Activated CD8-positive, alpha-beta T cell treated with anti-CD3 and anti-CD28 coated beads, Interleukin-2, amount 10 ng/mL, durations not matched to agents 7 days and 5 days (primary cell): ENCODE measurements at regions of chr1 and their contacts with region 1.

Region 1: DNA sequence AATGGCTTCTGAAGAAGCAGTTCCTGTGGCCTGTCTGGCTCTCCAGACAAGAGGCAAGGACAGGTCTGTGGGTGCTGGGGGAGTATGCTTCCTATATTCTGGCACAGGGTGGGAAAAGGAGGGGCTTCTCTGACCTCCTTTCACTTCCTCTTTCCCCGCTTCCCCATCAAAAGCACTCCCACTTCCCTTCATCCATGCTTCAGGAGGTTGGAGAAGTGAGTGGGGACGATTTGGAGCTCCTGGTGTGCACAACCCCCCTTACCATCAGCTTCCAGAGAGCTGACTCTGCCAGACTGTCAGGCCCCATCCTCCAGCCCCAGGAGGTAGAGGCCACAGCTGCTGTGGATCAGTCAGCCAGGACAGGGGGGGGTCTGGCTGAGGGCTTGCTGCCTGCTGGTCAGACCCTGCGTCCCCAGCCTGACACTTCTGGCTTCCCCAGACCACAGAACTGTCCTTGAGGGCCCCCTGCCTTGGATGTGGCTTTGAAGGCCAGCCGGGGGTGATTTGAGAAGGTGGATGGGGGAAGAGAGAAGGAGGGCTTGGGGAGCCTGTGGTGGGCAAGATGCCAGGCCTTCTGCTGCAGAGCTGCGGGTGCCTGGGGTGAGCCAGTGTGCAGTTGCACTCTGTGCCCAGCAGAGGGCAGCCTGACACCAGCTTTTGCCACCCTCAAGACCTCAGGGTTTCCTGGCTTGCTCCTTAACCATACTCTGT is 21.5 kb upstream of the TMEM222 start:
- DNase-seq: peak; percentile 79
- ATAC-seq: peak; percentile 83
- H3K4me3 Mint-ChIP-seq: no peak overlapping the region
- H3K27ac Mint-ChIP-seq: no peak overlapping the region
- H3K4me1 Mint-ChIP-seq: peaks cover 9% of the 10 kb centered on the region
- H3K27me3 Mint-ChIP-seq: no peaks in the 10 kb centered on the region

Region 2: GRCh38 chr1:27044613-27045151 is 255.8 kb before region 1 on chr1:
- CTCF ChIA-PET with region 1: interaction called, 83 read pairs
- POLR2A ChIA-PET with region 1: no interaction called
- DNase-seq: peak; percentile 92
- ATAC-seq: peak; percentile 91
- H3K4me3 Mint-ChIP-seq: peak overlapping the region; percentile 73
- H3K27ac Mint-ChIP-seq: peak overlapping the region; percentile 78
- H3K4me1 Mint-ChIP-seq: peaks cover 22% of the 10 kb centered on the region
- H3K27me3 Mint-ChIP-seq: peaks cover 3% of the 10 kb centered on the region

Region 3: DNA sequence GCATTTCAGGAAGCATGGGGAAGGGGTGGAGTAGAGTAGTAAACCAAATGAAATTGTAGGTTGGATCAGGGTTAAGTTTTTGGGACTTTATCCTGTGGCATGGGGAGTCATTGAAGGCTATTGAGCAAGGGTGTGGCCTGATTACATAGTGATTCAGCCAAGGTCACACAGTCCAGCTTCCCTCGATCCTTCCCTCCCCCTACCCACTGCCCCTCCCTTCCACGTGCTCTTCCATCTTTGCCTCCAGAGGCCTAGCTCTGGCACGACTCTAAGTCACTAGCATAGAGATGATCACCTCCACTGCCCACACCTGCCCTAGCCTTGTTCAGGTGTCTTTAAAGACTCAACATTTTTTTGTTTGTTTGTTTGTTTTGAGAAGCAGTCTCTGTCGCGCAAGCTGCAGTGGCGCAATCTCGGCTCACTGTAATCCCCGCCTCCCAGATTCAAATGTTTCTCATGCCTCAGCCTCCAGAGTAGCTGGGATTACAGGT is 108.4 kb before region 1 on chr1:
- CTCF ChIA-PET with region 1: interaction called, 12 read pairs
- POLR2A ChIA-PET with region 1: no interaction called
- DNase-seq: no peak
- ATAC-seq: no peak
- H3K4me3 Mint-ChIP-seq: no peak overlapping the region
- H3K27ac Mint-ChIP-seq: no peak overlapping the region
- H3K4me1 Mint-ChIP-seq: no peaks in the 10 kb centered on the region
- H3K27me3 Mint-ChIP-seq: peaks cover 6% of the 10 kb centered on the region

Region 4: GRCh38 chr1:27267153-27267552 is 33.3 kb before region 1 on chr1:
- CTCF ChIA-PET with region 1: interaction called, 10 read pairs
- POLR2A ChIA-PET with region 1: no interaction called
- DNase-seq: no peak
- ATAC-seq: no peak
- H3K4me3 Mint-ChIP-seq: no peak overlapping the region
- H3K27ac Mint-ChIP-seq: no peak overlapping the region
- H3K4me1 Mint-ChIP-seq: no peaks in the 10 kb centered on the region
- H3K27me3 Mint-ChIP-seq: no peaks in the 10 kb centered on the region

Region 5: GRCh38 chr1:27332536-27333281 is 32.2 kb after region 1 on chr1:
- CTCF ChIA-PET with region 1: interaction called, 31 read pairs
- POLR2A ChIA-PET with region 1: no interaction called
- DNase-seq: peak; percentile 72
- ATAC-seq: peak; percentile 88
- H3K4me3 Mint-ChIP-seq: no peak overlapping the region
- H3K27ac Mint-ChIP-seq: peak overlapping the region; percentile 60
- H3K4me1 Mint-ChIP-seq: peaks cover 25% of the 10 kb centered on the region
- H3K27me3 Mint-ChIP-seq: no peaks in the 10 kb centered on the region

Region 6: DNA sequence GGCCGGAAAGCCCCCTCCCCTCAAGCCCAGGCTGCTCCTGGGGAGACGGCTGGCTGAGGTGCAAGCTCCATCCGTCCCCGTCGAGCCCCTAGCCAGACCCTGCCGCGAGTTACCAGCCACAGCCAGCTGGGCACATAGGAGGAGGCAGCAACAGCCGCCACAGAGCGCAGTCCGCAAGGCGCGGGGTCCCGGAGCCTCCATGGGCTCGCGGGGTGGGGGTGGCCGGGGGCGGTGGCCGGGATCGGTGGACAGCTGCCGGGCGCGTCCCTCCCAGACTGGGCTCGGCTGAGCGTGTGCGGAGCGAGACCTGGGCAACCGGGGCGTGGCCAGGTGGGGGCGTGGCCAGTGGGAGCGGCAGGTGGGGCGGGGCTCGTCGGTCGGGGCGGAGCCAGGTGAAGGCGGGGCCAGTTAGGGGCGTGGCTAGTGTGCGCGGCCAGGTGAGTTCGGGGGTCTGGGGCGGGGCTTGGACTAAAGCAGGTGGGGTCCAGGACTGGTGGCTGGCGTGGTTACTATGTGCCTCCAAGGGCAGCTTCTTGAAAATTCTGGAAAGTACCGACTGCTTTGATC is 82.6 kb after region 1 on chr1 and contains the start of gene CD164L2:
- CTCF ChIA-PET with region 1: interaction called, 58 read pairs
- POLR2A ChIA-PET with region 1: no interaction called
- DNase-seq: peak; percentile 65
- ATAC-seq: peak; percentile 67
- H3K4me3 Mint-ChIP-seq: no peak within 1 kb of the TSS
- H3K27ac Mint-ChIP-seq: no peak within 1 kb of the TSS
- H3K4me1 Mint-ChIP-seq: no peaks in the 10 kb centered on the region
- H3K27me3 Mint-ChIP-seq: peaks cover 12% of the 10 kb centered on the region
- total RNA-seq, gene CD164L2: not detected

Region 7: GRCh38 chr1:27525296-27526272 is 225.1 kb after region 1 on chr1:
- CTCF ChIA-PET with region 1: interaction called, 10 read pairs
- POLR2A ChIA-PET with region 1: no interaction called
- DNase-seq: peak; percentile 85
- ATAC-seq: peak; percentile 56
- H3K4me3 Mint-ChIP-seq: peak overlapping the region; percentile 66
- H3K27ac Mint-ChIP-seq: peak overlapping the region; percentile 65
- H3K4me1 Mint-ChIP-seq: peaks cover 67% of the 10 kb centered on the region
- H3K27me3 Mint-ChIP-seq: no peaks in the 10 kb centered on the region

Region 8: DNA sequence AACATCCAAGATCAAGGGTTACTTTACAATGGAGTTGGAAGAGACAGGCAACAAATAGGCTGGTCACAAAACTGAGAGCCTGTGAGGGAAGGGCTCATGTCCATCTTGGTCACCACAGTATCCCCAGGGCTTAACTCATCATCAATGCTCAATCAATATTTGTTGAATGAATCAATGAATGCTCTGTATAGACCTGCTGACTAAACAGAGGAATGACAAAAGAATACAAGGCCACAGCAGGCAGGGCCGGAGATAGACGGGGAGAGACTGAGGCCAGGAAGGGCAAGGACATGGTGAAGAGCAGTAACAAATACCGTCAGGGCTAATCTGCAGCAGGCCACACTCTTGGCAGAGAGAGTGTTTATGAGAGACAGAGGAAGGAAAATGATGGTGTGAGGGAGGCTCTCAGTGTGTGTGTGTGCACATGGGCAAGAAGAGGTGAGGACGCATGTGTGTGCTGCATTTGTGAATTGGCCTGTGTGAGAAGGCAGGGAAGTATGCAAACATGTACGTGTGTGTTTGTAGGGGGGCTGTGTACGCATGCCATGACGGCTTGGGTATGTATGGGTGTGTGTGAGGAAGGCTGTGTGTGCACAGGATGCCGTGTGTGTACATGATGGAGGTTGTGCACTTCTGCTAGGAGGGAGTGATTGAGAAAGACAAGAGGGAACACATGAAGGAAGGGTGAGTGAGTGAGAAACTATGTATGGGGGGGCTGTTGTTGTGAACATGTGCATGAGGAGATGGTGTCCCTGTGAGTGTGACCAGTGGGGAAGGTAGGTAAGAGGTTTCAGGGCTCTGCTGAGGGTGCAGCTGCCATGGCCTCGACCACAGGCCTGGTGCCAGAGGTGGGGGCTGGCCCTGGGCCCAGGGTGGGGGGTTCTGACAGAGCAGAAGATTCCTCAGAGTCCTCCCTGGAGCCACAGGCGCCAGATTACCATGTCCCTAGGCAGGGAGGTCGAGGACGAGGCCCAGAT is 288.0 kb after region 1 on chr1:
- CTCF ChIA-PET with region 1: no interaction called
- POLR2A ChIA-PET with region 1: no interaction called
- DNase-seq: no peak
- ATAC-seq: no peak
- H3K4me3 Mint-ChIP-seq: no peak overlapping the region
- H3K27ac Mint-ChIP-seq: no peak overlapping the region
- H3K4me1 Mint-ChIP-seq: no peaks in the 10 kb centered on the region
- H3K27me3 Mint-ChIP-seq: no peaks in the 10 kb centered on the region